Thyroid gland (tissue), 4 donors: ENCODE measurements at regions of chr6 and their contacts with region 1.

Region 1: GRCh38 chr6:1596088-1596852 is 13.4 kb upstream of the FOXC1 start:
- DNase-seq: peak; percentile 64 to 76
- H3K4me3 ChIP-seq: no peak overlapping the region
- H3K27ac ChIP-seq: no peak overlapping the region
- H3K4me1 ChIP-seq: peaks cover 0 to 7% of the 10 kb centered on the region in 2 donors
- H3K27me3 ChIP-seq: peaks cover 4% of the 10 kb centered on the region
- CTCF ChIP-seq: peak; percentile 86 to 96 (median 92)
- POLR2A ChIP-seq: no peak

Region 2: DNA sequence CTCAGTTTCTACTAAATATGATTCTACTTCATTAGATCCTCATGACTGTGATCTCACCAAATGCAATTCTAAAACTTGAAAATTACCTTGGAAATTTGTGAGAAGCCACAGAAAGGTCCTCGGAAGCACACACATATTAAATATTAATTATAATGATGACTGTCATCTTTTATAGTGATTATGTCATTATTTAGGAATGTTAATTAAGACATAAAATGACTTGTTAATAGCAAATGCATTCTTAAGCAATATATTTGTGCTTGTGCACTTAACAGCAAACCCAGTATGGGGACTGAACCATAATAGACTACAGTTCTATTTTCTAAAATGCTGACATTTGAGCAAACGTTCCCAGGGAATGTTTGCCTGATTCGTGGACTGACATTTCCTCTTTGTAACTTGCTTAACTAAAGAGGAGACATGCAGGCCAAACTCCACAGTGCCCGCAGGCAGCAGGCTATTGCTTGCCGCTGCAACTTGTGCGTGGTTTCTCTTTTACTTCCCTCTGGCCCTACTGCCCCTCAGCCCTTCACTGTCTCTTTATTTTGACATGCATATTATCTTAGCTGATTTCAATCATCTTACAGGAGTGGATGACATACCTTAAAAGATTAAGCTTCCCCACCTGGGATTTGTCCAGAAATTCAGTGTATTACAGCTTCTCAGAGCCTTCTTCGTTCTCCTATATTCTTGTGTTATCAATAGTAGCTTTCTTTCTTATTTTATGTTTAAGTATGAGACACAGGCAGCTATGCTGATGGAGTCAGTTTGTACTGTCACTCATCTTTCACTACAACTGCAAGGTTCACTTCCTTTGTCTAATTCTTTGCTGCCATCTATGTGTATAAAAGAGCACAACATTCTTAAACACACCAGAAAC is 507.6 kb after region 1 on chr6:
- intact Hi-C with region 1: loop called (anchors 2 kb)
- DNase-seq: no peak
- H3K4me3 ChIP-seq: no peak overlapping the region
- H3K27ac ChIP-seq: no peak overlapping the region
- H3K4me1 ChIP-seq: no peaks in the 10 kb centered on the region
- H3K27me3 ChIP-seq: no peaks in the 10 kb centered on the region
- CTCF ChIP-seq: peak in 5 of 6 experiments; percentile 30 to 82 (median 64)
- POLR2A ChIP-seq: no peak

Region 3: GRCh38 chr6:2221726-2222274 is 625.5 kb after region 1 on chr6:
- intact Hi-C with region 1: no loop called
- DNase-seq: no peak
- H3K4me3 ChIP-seq: peak overlapping the region in 2 of 3 donors; percentile 17 to 20
- H3K27ac ChIP-seq: peak overlapping the region in 1 of 3 donors; percentile 29
- H3K4me1 ChIP-seq: peaks cover 0 to 10% of the 10 kb centered on the region in 2 donors
- H3K27me3 ChIP-seq: no peaks in the 10 kb centered on the region
- CTCF ChIP-seq: no peak
- POLR2A ChIP-seq: no peak

Region 4: GRCh38 chr6:2353412-2354137 is 757.3 kb after region 1 on chr6:
- intact Hi-C with region 1: loop called (anchors 5 kb)
- DNase-seq: peak; percentile 65 to 73
- H3K4me3 ChIP-seq: no peak overlapping the region
- H3K27ac ChIP-seq: no peak overlapping the region
- H3K4me1 ChIP-seq: no peaks in the 10 kb centered on the region
- H3K27me3 ChIP-seq: no peaks in the 10 kb centered on the region
- CTCF ChIP-seq: peak; percentile 42 to 86 (median 74)
- POLR2A ChIP-seq: no peak

Region 5: DNA sequence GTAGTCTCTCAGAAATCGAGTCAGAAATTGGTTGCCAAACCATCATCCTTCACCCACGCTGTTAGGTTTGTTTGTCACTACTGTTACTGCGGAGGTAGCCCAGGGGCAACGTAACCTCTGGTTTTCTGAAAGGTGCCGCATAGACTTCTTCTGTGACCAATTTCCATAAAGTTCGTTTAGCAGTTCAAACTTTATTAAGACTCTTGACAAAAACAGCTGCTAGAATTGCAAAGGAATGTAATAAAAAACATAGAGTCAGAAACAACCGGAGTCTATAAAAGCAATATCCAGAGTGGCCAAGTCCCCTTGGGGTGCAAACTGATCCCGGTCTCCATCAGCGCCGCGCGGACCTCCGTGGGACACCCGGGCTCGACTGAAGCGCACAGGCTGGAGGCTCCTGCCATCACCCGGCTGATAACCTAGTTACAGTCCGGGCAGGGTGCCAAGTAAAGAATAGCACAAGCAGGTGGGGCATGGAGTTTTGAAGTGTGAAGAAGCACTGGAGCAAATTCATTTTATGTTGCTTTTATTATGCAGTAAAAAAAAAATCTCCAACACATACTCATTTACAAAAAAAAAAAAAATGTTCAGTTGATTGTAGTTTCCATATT is 854.2 kb after region 1 on chr6:
- intact Hi-C with region 1: loop called (anchors 10 kb)
- DNase-seq: peak; percentile 76 to 79
- H3K4me3 ChIP-seq: no peak overlapping the region
- H3K27ac ChIP-seq: no peak overlapping the region
- H3K4me1 ChIP-seq: no peaks in the 10 kb centered on the region
- H3K27me3 ChIP-seq: no peaks in the 10 kb centered on the region
- CTCF ChIP-seq: no peak
- POLR2A ChIP-seq: no peak

Region 6: DNA sequence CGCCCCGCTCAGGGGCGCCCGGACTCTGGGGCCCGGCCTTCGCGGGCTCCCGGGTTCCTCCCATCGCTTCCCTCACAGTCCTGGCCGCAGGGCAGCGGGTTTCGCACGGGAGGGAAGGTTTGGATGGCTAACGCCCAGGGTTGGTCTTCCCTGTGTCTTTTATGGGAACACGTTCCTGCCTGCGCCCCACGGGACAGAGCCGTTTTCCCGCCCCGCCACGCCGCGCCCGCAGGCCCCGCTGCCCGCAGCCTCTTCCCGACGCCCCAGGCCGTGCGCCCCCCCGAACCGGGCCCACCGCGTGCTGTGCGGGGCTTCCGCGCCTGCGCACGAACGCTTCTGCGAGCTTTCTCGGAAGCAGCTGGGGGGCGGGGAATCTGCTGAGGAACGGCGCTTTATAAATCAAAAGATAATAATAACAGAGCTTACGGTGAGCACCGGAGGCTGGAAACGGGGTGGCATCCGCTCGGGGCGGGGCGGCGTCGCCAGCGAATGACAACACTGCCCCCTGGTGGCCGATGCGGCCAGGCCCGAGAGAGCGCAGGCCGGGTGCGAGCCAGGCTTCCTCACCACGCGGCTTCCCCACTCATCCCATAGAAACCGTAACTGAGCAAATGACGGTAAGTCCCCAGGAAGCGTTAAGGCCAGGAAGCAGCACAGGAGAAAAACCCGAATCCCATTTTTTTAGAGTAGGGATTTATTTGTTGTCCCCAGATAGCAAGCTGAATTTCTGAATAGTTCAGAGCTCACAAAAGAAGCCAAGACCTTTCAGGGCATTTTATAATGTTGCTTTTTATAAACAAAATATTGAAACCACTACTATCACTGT is 1038.1 kb after region 1 on chr6:
- intact Hi-C with region 1: loop called (anchors 5 kb)
- DNase-seq: peak; percentile 69 to 76
- H3K4me3 ChIP-seq: peak overlapping the region; percentile 40 to 57 (median 45)
- H3K27ac ChIP-seq: peak overlapping the region in 2 of 3 donors; percentile 22 to 65
- H3K4me1 ChIP-seq: peaks cover 3 to 11% of the 10 kb centered on the region in 2 donors
- H3K27me3 ChIP-seq: no peaks in the 10 kb centered on the region
- CTCF ChIP-seq: peak; percentile 81 to 99 (median 92)
- POLR2A ChIP-seq: no peak